ENCODE measurements at regions of chr4 and their contacts with region 1.

Region 1: GRCh38 chr4:152535903-152536544 is at the start of gene FBXW7:
- DNase-seq: peak; percentile 98 to 100 (median 100)
- ATAC-seq: peak; percentile 91
- H3K4me3 ChIP-seq: peak within 1 kb of the TSS; percentile 87
- H3K4me3 Mint-ChIP-seq: peak within 1 kb of the TSS; percentile 90 to 99 (median 97)
- H3K27ac ChIP-seq: peak within 1 kb of the TSS; percentile 90
- H3K27ac Mint-ChIP-seq: peak within 1 kb of the TSS; percentile 93 to 99 (median 97)
- H3K4me1 ChIP-seq: peaks cover 29 to 53% of the 10 kb centered on the region in 2 donors
- H3K4me1 Mint-ChIP-seq: peaks cover 43 to 80% (median 65%) of the 10 kb centered on the region in 7 donors
- H3K27me3 ChIP-seq: no peaks in the 10 kb centered on the region
- H3K27me3 Mint-ChIP-seq: no peaks in the 10 kb centered on the region
- total RNA-seq, gene FBXW7: 57.5 to 139 (median 116) TPM

Region 2: GRCh38 chr4:151362404-151363164 is 1173.4 kb before region 1 on chr4:
- CTCF ChIA-PET with region 1: no interaction called
- POLR2A ChIA-PET with region 1: no interaction called
- intact Hi-C with region 1: loop called in 1 of 2 experiments (anchors 1 kb)
- DNase-seq: peak; percentile 54 to 82 (median 72)
- ATAC-seq: peak; percentile 100
- H3K4me3 ChIP-seq: no peak overlapping the region
- H3K4me3 Mint-ChIP-seq: no peak overlapping the region
- H3K27ac ChIP-seq: no peak overlapping the region
- H3K27ac Mint-ChIP-seq: no peak overlapping the region
- H3K4me1 ChIP-seq: no peaks in the 10 kb centered on the region
- H3K4me1 Mint-ChIP-seq: peaks cover 0 to 5% (median 3%) of the 10 kb centered on the region in 7 donors
- H3K27me3 ChIP-seq: no peaks in the 10 kb centered on the region
- H3K27me3 Mint-ChIP-seq: peaks cover 0 to 21% (median 15%) of the 10 kb centered on the region in 5 donors

Region 3: DNA sequence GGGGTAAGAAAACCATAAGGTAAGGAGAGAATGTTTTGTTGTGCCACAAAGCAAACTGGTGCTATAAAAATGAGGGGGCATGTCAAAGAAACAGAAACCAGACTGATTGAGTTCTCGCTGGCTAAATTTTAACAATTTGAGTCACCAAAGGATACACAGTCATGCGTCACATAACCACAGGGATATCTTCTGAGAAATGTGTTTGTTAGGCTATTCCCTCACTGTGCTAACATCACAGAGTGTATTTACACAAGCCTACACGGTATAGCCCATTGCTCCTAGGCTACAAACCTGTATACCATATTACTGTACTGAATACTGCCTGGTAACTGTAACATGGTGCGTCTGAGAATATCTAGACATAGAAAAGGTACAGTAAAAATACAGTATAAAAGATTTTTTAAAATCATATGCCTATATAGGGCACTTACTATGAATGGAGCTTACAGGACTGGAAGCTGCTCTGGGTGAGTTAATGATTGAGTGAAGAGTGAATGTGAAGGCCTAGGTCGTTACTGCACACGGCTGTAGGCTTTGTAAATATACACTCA is 50.2 kb before region 1 on chr4:
- CTCF ChIA-PET with region 1: no interaction called
- POLR2A ChIA-PET with region 1: no interaction called
- intact Hi-C with region 1: loop called in 1 of 2 experiments (anchors 1 kb)
- DNase-seq: peak in 7 of 9 donors; percentile 10 to 49 (median 35)
- ATAC-seq: peak; percentile 97
- H3K4me3 ChIP-seq: no peak overlapping the region
- H3K4me3 Mint-ChIP-seq: peak overlapping the region in 2 of 10 donors; percentile 10 to 74
- H3K27ac ChIP-seq: no peak overlapping the region
- H3K27ac Mint-ChIP-seq: peak overlapping the region in 3 of 9 donors; percentile 30 to 79 (median 40)
- H3K4me1 ChIP-seq: peaks cover 0 to 13% of the 10 kb centered on the region in 2 donors
- H3K4me1 Mint-ChIP-seq: peaks cover 30 to 56% (median 45%) of the 10 kb centered on the region in 7 donors
- H3K27me3 ChIP-seq: no peaks in the 10 kb centered on the region
- H3K27me3 Mint-ChIP-seq: no peaks in the 10 kb centered on the region

Region 4: GRCh38 chr4:152559641-152560040 is 23.6 kb after region 1 on chr4:
- CTCF ChIA-PET with region 1: no interaction called
- POLR2A ChIA-PET with region 1: interaction called, 76 read pairs
- intact Hi-C with region 1: loop called (anchors 1 kb)
- DNase-seq: no peak
- ATAC-seq: no peak
- H3K4me3 ChIP-seq: no peak overlapping the region
- H3K4me3 Mint-ChIP-seq: no peak overlapping the region
- H3K27ac ChIP-seq: no peak overlapping the region
- H3K27ac Mint-ChIP-seq: no peak overlapping the region
- H3K4me1 ChIP-seq: peaks cover 3 to 5% of the 10 kb centered on the region in 2 donors
- H3K4me1 Mint-ChIP-seq: peaks cover 7 to 35% (median 21%) of the 10 kb centered on the region in 7 donors
- H3K27me3 ChIP-seq: no peaks in the 10 kb centered on the region
- H3K27me3 Mint-ChIP-seq: no peaks in the 10 kb centered on the region

Region 5: DNA sequence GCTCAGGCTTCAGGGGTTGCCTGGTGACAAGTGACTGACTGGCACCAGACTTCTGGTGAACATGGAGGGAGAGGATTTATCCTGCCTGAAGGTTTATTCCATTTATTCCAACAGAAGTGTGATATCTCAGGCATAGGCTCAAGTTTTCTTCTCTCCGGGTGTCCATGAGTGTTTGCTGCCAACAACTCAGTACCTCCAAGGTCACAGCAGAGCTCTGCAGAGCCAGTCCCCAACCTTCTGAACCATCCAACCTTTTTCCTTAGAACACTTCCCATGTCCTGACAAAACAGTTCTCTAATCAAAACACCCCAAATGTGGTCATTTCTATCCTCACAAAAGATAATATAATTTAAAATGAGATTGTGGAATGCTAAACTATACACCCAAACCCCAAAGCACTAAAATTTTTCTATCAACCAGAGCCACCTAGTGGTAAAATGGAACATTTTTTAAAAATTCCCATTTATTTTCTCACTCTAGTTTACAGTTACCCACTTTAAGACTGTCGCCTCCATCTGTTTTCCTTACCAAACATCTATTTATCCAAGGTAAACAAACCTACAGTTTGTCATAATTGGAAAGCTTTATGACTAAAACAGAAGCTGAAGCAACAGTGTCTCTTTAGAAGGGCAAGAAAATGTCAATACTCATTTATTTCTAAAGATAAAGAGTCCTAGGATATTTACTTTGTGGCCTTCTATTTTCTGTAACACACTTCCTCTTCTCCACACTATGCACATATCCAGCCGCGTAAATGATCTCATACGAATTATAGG is 104.2 kb after region 1 on chr4:
- CTCF ChIA-PET with region 1: interaction called, 3 read pairs
- POLR2A ChIA-PET with region 1: interaction called, 6 read pairs
- intact Hi-C with region 1: loop called (anchors 1 kb)
- DNase-seq: peak in 6 of 9 donors; percentile 14 to 51 (median 34)
- ATAC-seq: no peak
- H3K4me3 ChIP-seq: no peak overlapping the region
- H3K4me3 Mint-ChIP-seq: no peak overlapping the region
- H3K27ac ChIP-seq: no peak overlapping the region
- H3K27ac Mint-ChIP-seq: peak overlapping the region in 3 of 9 donors; percentile 2 to 63 (median 20)
- H3K4me1 ChIP-seq: peaks cover 0 to 15% of the 10 kb centered on the region in 2 donors
- H3K4me1 Mint-ChIP-seq: peaks cover 0 to 31% (median 9%) of the 10 kb centered on the region in 7 donors
- H3K27me3 ChIP-seq: no peaks in the 10 kb centered on the region
- H3K27me3 Mint-ChIP-seq: no peaks in the 10 kb centered on the region

Region 6: DNA sequence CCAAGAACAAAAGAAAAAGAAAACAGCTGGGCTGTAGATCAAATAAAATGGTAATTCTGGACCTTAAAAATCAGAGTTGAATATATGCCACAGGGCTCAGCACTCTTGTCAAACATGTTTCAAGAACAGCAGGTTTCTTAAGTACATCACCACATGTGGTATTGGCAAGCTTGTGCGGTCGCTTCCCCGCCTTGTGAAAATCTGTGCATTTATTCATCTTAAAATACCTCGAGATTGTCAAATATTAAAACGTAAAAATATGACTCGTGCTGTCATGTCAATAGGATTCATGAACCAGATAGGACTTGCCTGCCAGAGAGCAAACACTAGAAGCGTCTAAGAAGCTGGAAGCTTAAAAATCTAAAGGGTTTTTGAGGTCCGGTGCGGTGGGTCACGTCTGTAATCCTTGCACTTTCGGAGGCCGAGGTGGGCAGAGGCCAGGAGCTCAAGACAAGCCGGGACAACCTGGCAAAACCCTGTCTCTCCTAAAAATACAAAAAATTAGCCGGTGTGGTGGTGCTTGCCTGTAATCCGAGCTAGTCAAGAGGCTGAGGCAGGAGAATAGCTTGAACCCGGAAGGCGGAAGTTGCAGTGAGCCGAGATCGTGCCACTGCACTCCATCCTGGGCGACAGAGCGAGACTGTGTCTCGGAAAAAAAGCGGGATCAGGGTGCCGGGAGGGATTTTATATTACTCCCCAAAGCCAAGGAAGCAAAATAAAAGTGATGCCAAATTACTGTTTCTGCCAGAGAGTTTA is 184.0 kb after region 1 on chr4:
- CTCF ChIA-PET with region 1: no interaction called
- POLR2A ChIA-PET with region 1: no interaction called
- intact Hi-C with region 1: no loop called
- DNase-seq: no peak
- ATAC-seq: no peak
- H3K4me3 ChIP-seq: no peak overlapping the region
- H3K4me3 Mint-ChIP-seq: no peak overlapping the region
- H3K27ac ChIP-seq: no peak overlapping the region
- H3K27ac Mint-ChIP-seq: no peak overlapping the region
- H3K4me1 ChIP-seq: no peaks in the 10 kb centered on the region
- H3K4me1 Mint-ChIP-seq: no peaks in the 10 kb centered on the region
- H3K27me3 ChIP-seq: no peaks in the 10 kb centered on the region
- H3K27me3 Mint-ChIP-seq: peaks cover 0 to 10% (median 5%) of the 10 kb centered on the region in 5 donors

Region 7: GRCh38 chr4:153249199-153250041 is 713.4 kb after region 1 on chr4:
- CTCF ChIA-PET with region 1: no interaction called
- POLR2A ChIA-PET with region 1: no interaction called
- intact Hi-C with region 1: loop called in 1 of 2 experiments (anchors 1 kb)
- DNase-seq: peak; percentile 81 to 91 (median 86)
- ATAC-seq: peak; percentile 98
- H3K4me3 ChIP-seq: peak overlapping the region; percentile 62
- H3K4me3 Mint-ChIP-seq: peak overlapping the region; percentile 85 to 96 (median 92)
- H3K27ac ChIP-seq: peak overlapping the region; percentile 80
- H3K27ac Mint-ChIP-seq: peak overlapping the region; percentile 81 to 98 (median 96)
- H3K4me1 ChIP-seq: peaks cover 3 to 10% of the 10 kb centered on the region in 2 donors
- H3K4me1 Mint-ChIP-seq: peaks cover 7 to 44% (median 26%) of the 10 kb centered on the region in 7 donors
- H3K27me3 ChIP-seq: no peaks in the 10 kb centered on the region
- H3K27me3 Mint-ChIP-seq: peaks cover 0 to 11% (median 0%) of the 10 kb centered on the region in 5 donors